ENCODE measurements at regions of chr22 and their contacts with region 1.

Region 1: GRCh38 chr22:26502688-26503561 is 9.3 kb downstream of the TFIP11 start:
- DNase-seq: peak; percentile 89
- H3K4me3 Mint-ChIP-seq: peak overlapping the region; percentile 44
- H3K27ac Mint-ChIP-seq: peak overlapping the region; percentile 94
- H3K4me1 Mint-ChIP-seq: peaks cover 39% of the 10 kb centered on the region
- H3K27me3 Mint-ChIP-seq: no peaks in the 10 kb centered on the region

Region 2: GRCh38 chr22:26302726-26303125 is 200.2 kb before region 1 on chr22:
- CTCF ChIA-PET with region 1: no interaction called
- POLR2A ChIA-PET with region 1: no interaction called
- DNase-seq: no peak
- H3K4me3 Mint-ChIP-seq: no peak overlapping the region
- H3K27ac Mint-ChIP-seq: no peak overlapping the region
- H3K4me1 Mint-ChIP-seq: no peaks in the 10 kb centered on the region
- H3K27me3 Mint-ChIP-seq: peaks cover 10% of the 10 kb centered on the region

Region 3: DNA sequence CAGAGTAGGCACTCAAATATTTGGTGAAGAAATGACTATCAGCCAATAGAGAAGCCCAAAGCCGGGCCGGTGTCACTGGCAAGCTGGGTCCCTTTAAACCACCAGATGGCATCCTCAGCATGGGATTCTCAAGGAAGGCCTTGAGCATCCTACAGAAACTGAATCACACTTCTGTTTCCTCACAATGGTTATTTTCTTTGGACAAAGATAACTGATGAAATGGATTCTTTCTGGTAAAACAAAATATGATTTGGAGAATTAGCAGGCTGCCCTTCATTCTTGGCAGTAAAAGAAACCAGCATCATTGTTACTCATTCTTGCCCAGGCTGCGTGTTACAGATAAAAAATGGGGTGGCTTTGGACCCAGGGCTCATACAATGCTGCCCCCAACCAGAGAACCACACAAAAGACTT is 104.2 kb before region 1 on chr22:
- CTCF ChIA-PET with region 1: no interaction called
- POLR2A ChIA-PET with region 1: no interaction called
- DNase-seq: peak; percentile 69
- H3K4me3 Mint-ChIP-seq: no peak overlapping the region
- H3K27ac Mint-ChIP-seq: no peak overlapping the region
- H3K4me1 Mint-ChIP-seq: peaks cover 6% of the 10 kb centered on the region
- H3K27me3 Mint-ChIP-seq: peaks cover 1% of the 10 kb centered on the region

Region 4: DNA sequence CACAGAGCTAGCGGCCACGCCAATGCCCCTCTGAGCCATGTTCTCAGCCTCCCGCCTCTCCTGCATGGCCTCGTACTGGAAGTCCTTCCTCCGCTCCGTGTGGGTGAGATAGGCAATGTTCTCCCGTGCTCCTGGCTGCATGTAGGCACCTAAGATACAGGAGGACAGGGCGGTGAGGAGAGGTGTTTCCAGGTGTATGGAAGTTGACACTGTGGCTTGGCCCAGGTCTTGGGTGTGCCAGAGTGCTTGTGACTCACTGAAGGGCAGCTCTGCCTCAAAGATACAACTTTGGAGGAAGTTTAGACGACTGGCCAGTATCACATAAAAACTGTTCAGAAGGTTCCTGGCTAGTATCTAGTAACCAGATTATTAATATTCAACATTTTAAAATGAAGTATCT is 10.7 kb before region 1 on chr22:
- CTCF ChIA-PET with region 1: interaction called, 11 read pairs
- POLR2A ChIA-PET with region 1: interaction called, 10 read pairs
- DNase-seq: no peak
- H3K4me3 Mint-ChIP-seq: no peak overlapping the region
- H3K27ac Mint-ChIP-seq: no peak overlapping the region
- H3K4me1 Mint-ChIP-seq: peaks cover 14% of the 10 kb centered on the region
- H3K27me3 Mint-ChIP-seq: no peaks in the 10 kb centered on the region

Region 5: GRCh38 chr22:26553056-26553752 is 50.3 kb after region 1 on chr22:
- CTCF ChIA-PET with region 1: no interaction called
- POLR2A ChIA-PET with region 1: no interaction called
- DNase-seq: no peak
- H3K4me3 Mint-ChIP-seq: no peak overlapping the region
- H3K27ac Mint-ChIP-seq: no peak overlapping the region
- H3K4me1 Mint-ChIP-seq: peaks cover 25% of the 10 kb centered on the region
- H3K27me3 Mint-ChIP-seq: no peaks in the 10 kb centered on the region

Region 6: GRCh38 chr22:26658671-26659478 is 155.9 kb after region 1 on chr22:
- CTCF ChIA-PET with region 1: interaction called, 47 read pairs
- POLR2A ChIA-PET with region 1: interaction called, 5 read pairs
- DNase-seq: peak; percentile 88
- H3K4me3 Mint-ChIP-seq: peak overlapping the region; percentile 96
- H3K27ac Mint-ChIP-seq: peak overlapping the region; percentile 88
- H3K4me1 Mint-ChIP-seq: peaks cover 48% of the 10 kb centered on the region
- H3K27me3 Mint-ChIP-seq: peaks cover 12% of the 10 kb centered on the region

Region 7: DNA sequence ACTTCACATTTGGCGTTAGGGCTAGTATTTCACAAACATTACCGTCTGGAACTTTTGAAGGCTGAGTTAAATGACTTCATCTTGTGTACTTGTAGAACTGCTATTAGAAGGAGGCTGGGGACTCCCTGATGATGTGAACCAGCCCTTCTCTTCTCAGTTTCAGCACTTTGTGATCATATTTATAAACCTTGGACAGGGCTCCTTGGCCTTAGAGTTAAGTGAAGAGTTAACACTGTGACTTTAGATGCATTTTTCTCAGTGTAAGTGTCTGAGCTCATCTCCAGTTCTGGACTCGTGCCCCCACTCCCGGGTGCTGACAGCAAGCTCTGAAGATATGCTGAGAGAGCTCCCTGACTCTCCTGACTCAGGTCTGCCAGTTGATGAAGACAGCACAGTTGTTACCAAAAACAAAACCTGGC is 162.9 kb after region 1 on chr22:
- CTCF ChIA-PET with region 1: interaction called, 47 read pairs
- POLR2A ChIA-PET with region 1: interaction called, 13 read pairs
- DNase-seq: no peak
- H3K4me3 Mint-ChIP-seq: no peak overlapping the region
- H3K27ac Mint-ChIP-seq: peak overlapping the region; percentile 84
- H3K4me1 Mint-ChIP-seq: peaks cover 74% of the 10 kb centered on the region
- H3K27me3 Mint-ChIP-seq: no peaks in the 10 kb centered on the region

Measured in activated CD4-positive, alpha-beta memory T cell treated with anti-CD3 and anti-CD28 coated beads, Interleukin-2, amount 10 ng/mL, durations not matched to agents 7 days and 5 days (primary cell).